B cell (primary cell): ENCODE measurements at regions of chr5 and their contacts with region 1.

Region 1: GRCh38 chr5:42656651-42657015 is 100.0 kb upstream of the CCDC152 start:
- DNase-seq: peak; percentile 36
- ATAC-seq: peak; percentile 45
- H3K4me3 ChIP-seq: no peak overlapping the region
- H3K4me3 Mint-ChIP-seq: no peak overlapping the region
- H3K27ac ChIP-seq: no peak overlapping the region
- H3K27ac Mint-ChIP-seq: no peak overlapping the region
- H3K4me1 ChIP-seq: peaks cover 2 to 6% of the 10 kb centered on the region in 2 donors
- H3K4me1 Mint-ChIP-seq: peaks cover 5% of the 10 kb centered on the region
- H3K27me3 ChIP-seq: no peaks in the 10 kb centered on the region
- H3K27me3 Mint-ChIP-seq: peaks cover 10% of the 10 kb centered on the region
- CTCF ChIP-seq: peak; percentile 60

Region 2: GRCh38 chr5:42514754-42515153 is 141.9 kb before region 1 on chr5:
- CTCF ChIA-PET with region 1: interaction called, 88 read pairs
- POLR2A ChIA-PET with region 1: no interaction called
- intact Hi-C with region 1: loop called (anchors 1 kb)
- DNase-seq: peak; percentile 44
- ATAC-seq: peak; percentile 31
- H3K4me3 ChIP-seq: no peak overlapping the region
- H3K4me3 Mint-ChIP-seq: no peak overlapping the region
- H3K27ac ChIP-seq: no peak overlapping the region
- H3K27ac Mint-ChIP-seq: no peak overlapping the region
- H3K4me1 ChIP-seq: no peaks in the 10 kb centered on the region
- H3K4me1 Mint-ChIP-seq: no peaks in the 10 kb centered on the region
- H3K27me3 ChIP-seq: no peaks in the 10 kb centered on the region
- H3K27me3 Mint-ChIP-seq: no peaks in the 10 kb centered on the region
- CTCF ChIP-seq: peak; percentile 46

Region 3: DNA sequence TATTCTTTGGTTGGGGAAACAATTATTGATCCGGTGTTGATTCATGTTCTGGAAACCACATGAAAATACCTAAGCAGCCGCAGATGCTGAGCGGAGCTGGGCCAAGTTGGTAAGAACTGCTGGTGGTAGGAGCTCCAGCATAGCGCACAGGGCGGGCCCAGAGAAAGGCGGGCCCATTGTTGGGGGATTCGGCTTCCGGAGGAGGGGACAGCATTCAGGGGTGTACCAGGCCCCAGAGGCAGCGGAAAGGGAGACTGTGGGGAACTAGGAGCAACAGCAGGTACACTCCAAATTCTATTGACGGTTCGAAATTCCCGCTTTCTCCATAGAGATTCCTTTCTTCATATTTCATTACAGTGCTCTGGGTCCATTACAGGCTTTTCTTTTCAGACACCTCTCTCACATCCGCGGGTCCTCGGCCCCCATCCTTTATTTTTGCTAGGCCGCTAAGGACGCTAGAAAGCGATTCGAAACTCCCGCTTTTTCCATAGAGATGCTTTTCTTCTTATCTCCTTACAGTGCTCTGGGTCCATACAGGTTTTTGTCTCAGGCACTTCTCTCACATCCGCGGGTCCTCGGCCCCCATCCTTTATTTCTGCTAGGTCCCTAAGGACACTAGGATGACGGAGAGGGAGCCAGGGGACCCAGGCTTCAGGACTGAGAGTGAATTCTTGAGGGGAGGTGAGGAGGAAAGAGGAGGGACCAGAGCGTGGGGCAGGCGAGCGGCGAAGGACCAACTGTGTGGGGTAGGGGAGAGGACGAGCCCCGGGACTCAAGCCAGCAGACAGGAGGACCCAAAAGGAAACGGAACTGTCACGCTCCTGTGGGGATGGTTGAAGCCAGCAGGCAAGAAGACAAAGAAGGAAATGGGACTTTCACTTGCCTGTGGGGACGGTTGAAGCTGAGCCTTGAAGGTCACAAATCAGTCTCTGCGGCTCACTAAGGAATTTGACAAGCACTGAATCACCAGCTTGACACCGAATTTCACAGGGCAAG is 100.3 kb after region 1 on chr5 and contains the start of gene CCDC152:
- CTCF ChIA-PET with region 1: no interaction called
- POLR2A ChIA-PET with region 1: no interaction called
- intact Hi-C with region 1: no loop called
- DNase-seq: peak; percentile 50
- ATAC-seq: peak; percentile 80
- H3K4me3 ChIP-seq: peak within 1 kb of the TSS; percentile 8 to 66 (median 52)
- H3K4me3 Mint-ChIP-seq: peak within 1 kb of the TSS; percentile 89
- H3K27ac ChIP-seq: peak within 1 kb of the TSS; percentile 1 to 7
- H3K27ac Mint-ChIP-seq: peak within 1 kb of the TSS; percentile 54
- H3K4me1 ChIP-seq: peaks cover 4 to 7% of the 10 kb centered on the region in 2 donors
- H3K4me1 Mint-ChIP-seq: peaks cover 9% of the 10 kb centered on the region
- H3K27me3 ChIP-seq: no peaks in the 10 kb centered on the region
- H3K27me3 Mint-ChIP-seq: no peaks in the 10 kb centered on the region
- CTCF ChIP-seq: no peak
- total RNA-seq, gene CCDC152: 4.2 and 4.8 TPM in 2 replicates